H1 (cell line): ENCODE measurements at regions of chr19 and their contacts with region 1.

Region 1: DNA sequence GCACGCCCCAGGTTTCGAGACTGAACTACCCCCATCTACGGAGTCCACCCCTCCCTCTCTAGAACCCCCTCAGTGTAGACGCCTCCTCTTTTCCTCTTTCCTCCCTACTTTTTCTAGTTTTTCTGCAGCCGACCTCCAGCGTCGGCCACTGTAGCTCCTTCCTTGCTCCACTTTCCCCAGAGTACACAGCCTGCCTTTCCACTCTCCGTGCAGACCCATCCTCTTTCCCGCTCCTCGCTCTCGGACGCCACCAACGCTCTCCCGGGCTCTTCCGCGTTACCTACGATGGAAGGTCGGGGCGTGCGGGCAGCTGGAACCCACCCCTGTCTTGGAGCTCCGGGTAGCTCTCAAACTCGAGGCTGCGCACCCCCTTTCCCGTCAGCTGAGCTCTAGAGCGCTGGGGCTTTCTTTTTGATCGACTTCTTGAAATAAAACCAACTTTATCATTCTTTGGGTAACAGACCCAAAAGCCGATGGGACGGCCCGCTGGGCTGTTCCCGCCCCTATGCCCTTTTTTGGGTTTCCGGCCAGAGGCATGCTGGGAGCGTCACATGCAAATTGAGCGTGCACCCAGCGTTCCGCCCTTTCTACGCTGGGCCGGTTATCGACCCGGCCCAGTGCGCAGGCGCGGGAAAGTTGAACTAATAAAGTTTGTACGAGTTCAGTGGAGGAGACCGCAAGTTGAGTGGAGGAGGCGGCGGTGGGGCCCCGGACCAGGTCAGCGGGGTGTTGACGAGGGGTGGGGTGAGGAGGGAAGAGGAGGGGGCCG is at the starts of genes BCL2L12 and IRF3:
- DNase-seq: peak; percentile 86 to 98
- H3K4me3 ChIP-seq: peak within 1 kb of the TSS; percentile 89 to 98 (median 96)
- H3K27ac ChIP-seq: peak within 1 kb of the TSS; percentile 72
- H3K4me1 ChIP-seq: peaks cover 0 to 7% (median 2%) of the 10 kb centered on the region in 4 experiments; a peak in 4 of 7 replicates
- H3K27me3 ChIP-seq: no peaks in the 10 kb centered on the region
- CTCF ChIP-seq: no peak
- EP300 ChIP-seq: no peak
- POLR2A ChIP-seq: no peak
- RAD21 ChIP-seq: no peak
- total RNA-seq, gene BCL2L12: 126 and 133 TPM in 2 replicates
- total RNA-seq, gene IRF3: 114 and 115 TPM in 2 replicates

Region 2: DNA sequence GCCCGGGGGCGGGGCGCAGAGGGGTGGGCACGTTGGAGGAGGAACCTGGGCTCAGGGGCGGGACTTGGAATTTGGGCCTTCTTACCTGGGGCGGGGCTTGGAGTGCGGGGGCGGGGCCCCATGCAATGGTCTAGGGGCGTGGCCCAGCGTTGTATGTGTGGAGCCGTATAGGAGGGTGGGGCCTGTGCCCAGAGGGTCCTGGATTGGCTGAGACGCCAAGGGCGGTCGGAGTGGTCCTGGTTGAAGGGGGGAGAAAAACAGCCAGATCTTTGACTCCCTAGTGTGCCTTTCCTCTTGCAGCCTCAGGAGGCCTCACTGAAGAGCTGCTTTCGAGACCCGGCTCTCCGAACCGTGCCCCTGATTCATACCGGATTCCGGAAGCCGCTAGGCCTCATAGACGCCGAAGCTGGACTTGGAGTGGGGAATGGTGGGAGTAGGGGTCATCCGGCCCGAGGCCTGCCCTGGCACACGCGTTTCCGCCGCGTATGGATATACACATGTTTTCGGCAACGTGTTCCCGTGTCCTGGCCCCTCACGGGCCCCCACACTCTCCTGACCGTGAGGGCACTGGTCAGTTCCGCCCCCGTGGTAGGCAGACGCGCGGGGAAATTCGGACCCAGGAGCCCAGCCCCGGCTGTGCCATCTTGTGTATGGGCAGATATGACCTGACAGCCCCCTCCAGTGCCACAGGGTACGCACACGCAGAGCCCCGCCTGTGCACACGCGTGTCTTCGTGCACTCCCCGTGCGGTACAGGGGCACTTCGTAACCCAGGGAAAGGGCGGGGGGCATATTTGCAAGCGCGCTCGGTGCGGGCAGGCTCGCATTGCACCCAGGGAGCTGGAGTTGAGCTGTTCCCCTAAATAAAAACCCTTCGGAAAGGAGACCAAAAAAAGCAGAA is 75.2 kb before region 1 on chr19:
- CTCF ChIA-PET with region 1: interaction called, 3 read pairs
- POLR2A ChIA-PET with region 1: interaction called, 11 read pairs
- DNase-seq: peak; percentile 98 to 99
- H3K4me3 ChIP-seq: peak overlapping the region; percentile 83 to 100 (median 93)
- H3K27ac ChIP-seq: peak overlapping the region; percentile 84
- H3K4me1 ChIP-seq: peaks cover 4 to 10% (median 5%) of the 10 kb centered on the region in 4 experiments; a peak in 6 of 7 replicates
- H3K27me3 ChIP-seq: no peaks in the 10 kb centered on the region
- CTCF ChIP-seq: peak in 1 of 3 experiments; percentile 8; a peak in 1 of 4 replicates
- EP300 ChIP-seq: no peak
- POLR2A ChIP-seq: peak; percentile 81 to 90
- RAD21 ChIP-seq: no peak

Region 3: DNA sequence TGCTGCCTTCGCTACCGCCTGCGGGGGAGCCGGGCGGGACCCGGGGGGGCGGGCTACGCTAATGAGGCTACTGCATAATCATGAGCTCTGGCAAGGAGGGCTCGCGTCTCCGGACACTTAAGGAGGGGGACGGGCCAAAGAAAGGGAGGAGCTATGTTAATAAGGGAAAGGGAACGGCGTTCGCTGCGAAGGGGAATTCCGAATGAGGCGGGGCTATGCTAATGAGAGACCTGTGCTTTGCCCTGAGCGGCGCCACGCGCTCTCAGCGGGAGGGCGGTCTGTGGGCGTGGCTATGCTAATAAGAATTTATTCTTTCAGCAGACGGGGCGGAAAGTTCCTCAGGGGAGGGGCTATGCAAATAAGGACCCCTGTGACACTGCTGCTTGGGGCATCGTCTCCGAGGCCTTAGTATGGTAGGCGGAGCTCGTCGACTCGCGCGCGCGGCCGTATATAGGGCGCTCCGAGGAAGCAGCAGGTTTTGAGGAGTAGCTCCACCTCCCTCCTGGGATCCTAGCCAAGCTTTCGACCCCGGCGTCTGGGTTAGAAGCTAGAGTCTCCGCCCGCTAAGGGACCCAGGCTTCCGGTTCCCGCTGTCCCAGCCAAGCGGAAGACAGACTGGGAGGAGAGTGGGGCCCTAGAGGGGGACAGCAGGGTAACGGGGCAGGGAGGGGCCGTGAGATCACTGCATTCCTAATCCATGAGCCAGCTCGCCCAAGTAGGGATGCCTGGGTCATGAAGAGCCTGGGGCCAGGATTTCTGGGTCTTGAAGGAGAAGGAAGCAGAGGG is 25.2 kb before region 1 on chr19 and contains the start of gene RRAS:
- CTCF ChIA-PET with region 1: interaction called, 8 read pairs
- POLR2A ChIA-PET with region 1: interaction called, 236 read pairs
- DNase-seq: peak; percentile 100
- H3K4me3 ChIP-seq: peak within 1 kb of the TSS; percentile 38 to 72 (median 66)
- H3K27ac ChIP-seq: peak within 1 kb of the TSS; percentile 93
- H3K4me1 ChIP-seq: peaks cover 2 to 27% (median 15%) of the 10 kb centered on the region in 4 experiments
- H3K27me3 ChIP-seq: no peaks in the 10 kb centered on the region
- CTCF ChIP-seq: no peak
- EP300 ChIP-seq: peak in 1 of 2 experiments; percentile 64; a peak in 2 of 3 replicates
- POLR2A ChIP-seq: peak in 1 of 2 experiments; percentile 63; a peak in 1 of 3 replicates
- RAD21 ChIP-seq: no peak
- total RNA-seq, gene RRAS: 16.9 and 17.7 TPM in 2 replicates

Region 4: GRCh38 chr19:49684218-49684982 is 18.9 kb after region 1 on chr19:
- CTCF ChIA-PET with region 1: interaction called, 23 read pairs
- POLR2A ChIA-PET with region 1: interaction called, 275 read pairs
- DNase-seq: peak in 1 of 2 experiments; percentile 84
- H3K4me3 ChIP-seq: no peak overlapping the region
- H3K27ac ChIP-seq: no peak overlapping the region
- H3K4me1 ChIP-seq: peaks cover 2 to 22% (median 16%) of the 10 kb centered on the region in 4 experiments
- H3K27me3 ChIP-seq: no peaks in the 10 kb centered on the region
- CTCF ChIP-seq: peak; percentile 66 to 69 (median 68)
- EP300 ChIP-seq: no peak
- POLR2A ChIP-seq: peak in 1 of 2 experiments; percentile 68; a peak in 2 of 3 replicates
- RAD21 ChIP-seq: peak in 1 of 2 experiments; percentile 41; a peak in 2 of 4 replicates

Region 5: DNA sequence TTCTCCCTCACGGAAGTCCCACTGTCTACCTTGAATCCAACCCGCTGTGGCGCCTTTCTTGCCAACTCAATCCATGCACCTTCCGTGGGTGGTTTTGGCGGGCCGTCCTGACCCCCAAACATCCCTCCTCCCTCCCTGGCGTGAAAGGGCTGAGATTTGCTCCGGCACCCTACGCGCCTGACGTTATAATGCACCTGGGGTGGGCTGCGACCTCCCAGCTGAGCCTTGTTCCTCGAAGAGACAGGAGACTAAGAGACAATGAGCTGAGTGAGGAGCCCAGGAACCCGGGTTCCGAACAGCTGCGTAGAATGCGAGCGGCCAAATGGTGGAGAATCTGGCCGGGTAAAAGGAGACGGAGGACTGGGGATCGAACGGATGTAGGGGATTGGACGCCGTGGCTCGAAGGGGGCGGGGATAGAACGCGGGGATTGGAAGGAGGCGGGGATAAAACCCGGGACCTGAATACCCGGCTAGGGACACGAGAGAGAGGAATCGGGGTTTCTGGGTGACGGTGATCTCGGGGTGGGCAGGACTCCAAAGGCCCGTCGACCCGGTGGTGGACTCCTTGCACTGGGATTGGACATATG is 25.2 kb after region 1 on chr19 and contains the start of gene CPT1C:
- CTCF ChIA-PET with region 1: interaction called, 4 read pairs
- POLR2A ChIA-PET with region 1: interaction called, 10 read pairs
- DNase-seq: peak; percentile 73 to 94
- H3K4me3 ChIP-seq: peak within 1 kb of the TSS; percentile 88 to 94 (median 92)
- H3K27ac ChIP-seq: peak within 1 kb of the TSS; percentile 57; the same call in 1 of the 2 replicates
- H3K4me1 ChIP-seq: peaks cover 0 to 25% (median 13%) of the 10 kb centered on the region in 4 experiments; a peak in 6 of 7 replicates
- H3K27me3 ChIP-seq: no peaks in the 10 kb centered on the region
- CTCF ChIP-seq: 0 out of 4 replicates have a peak, but pooled peaks of 1 of the 3 experiments have one; percentile 9
- EP300 ChIP-seq: no peak
- POLR2A ChIP-seq: peak; percentile 81; a peak in 2 of 3 replicates
- RAD21 ChIP-seq: no peak
- total RNA-seq, gene CPT1C: 91.8 and 98.3 TPM in 2 replicates